Naive thymus-derived CD4-positive, alpha-beta T cell (primary cell): ENCODE measurements at regions of chr6 and their contacts with region 1.

Region 1: DNA sequence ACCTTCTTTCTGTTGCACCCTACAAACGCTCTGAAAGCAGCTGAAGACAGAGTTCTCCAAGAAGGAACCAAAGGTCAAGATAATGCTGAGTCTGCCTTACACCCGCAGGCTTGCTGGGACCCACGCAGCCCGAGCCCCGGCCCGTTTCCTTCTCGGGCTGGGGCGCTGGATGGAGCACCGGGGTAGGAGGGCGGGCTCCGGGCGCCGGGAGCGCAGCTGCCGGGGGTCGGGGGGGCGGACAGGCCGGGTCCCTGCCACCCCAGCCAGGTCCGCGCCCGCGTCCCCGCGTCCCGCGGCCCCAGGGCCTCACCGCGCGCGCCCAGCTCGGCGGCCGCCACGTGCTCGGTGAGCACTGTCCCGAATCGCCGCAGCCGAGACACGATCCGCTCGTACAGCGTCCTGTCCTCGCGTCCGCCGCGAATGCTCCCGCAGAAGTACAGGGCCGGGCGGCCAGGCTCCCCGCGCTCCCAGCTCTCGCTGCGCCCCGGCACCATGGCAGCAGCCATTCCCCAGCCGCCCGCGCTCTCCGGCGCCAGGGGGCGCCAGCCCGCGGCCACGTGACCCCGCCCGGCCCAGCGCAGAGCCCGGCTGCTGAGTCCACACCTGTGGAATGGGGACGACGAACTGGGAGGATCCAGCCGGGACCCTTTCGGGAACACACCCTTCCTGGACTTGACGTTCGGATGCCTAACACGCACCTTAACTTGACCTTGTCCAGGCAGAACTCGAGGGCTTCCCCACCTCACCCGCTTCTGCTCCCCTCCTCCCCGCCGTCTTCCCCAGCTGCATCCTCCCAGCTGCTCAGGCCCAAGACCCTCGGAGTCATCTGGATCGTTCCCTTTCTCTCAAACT is at the start of gene DNPH1:
- DNase-seq: peak; percentile 65 to 91 (median 81)
- ATAC-seq: peak; percentile 84
- H3K4me3 ChIP-seq: peak within 1 kb of the TSS; percentile 53
- H3K4me3 Mint-ChIP-seq: peak within 1 kb of the TSS; percentile 87 to 95 (median 91)
- H3K27ac ChIP-seq: peak within 1 kb of the TSS; percentile 88
- H3K27ac Mint-ChIP-seq: peak within 1 kb of the TSS; percentile 92 to 98 (median 95)
- H3K4me1 ChIP-seq: peaks cover 5 to 24% of the 10 kb centered on the region in 2 donors
- H3K4me1 Mint-ChIP-seq: peaks cover 28 to 48% (median 40%) of the 10 kb centered on the region in 7 donors
- H3K27me3 ChIP-seq: no peaks in the 10 kb centered on the region
- H3K27me3 Mint-ChIP-seq: peaks cover 0 to 16% (median 0%) of the 10 kb centered on the region in 5 donors
- total RNA-seq, gene DNPH1: 25.4 to 65.7 (median 33.9) TPM

Region 2: DNA sequence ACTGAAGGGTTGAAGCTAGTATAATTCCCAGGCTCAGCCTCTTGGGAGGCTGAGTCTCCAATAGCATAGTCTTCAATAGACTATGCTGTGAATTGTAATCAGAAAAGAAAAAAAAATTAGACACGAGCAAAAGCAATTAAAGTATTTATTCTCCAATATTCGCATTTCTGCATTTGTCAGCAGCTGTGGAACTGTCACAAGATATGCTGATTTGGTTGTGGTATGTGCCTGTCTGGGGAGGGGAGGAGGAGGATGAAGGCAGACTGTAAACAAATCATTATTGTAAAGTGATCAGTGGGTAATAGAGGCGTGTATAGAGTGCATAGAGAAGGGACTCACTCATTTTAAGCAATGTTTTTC is 457.5 kb before region 1 on chr6:
- CTCF ChIA-PET with region 1: no interaction called
- POLR2A ChIA-PET with region 1: interaction called, 3 read pairs
- intact Hi-C with region 1: loop called in 1 of 2 experiments (anchors 1 kb)
- DNase-seq: peak in 1 of 9 donors; percentile 63
- ATAC-seq: peak; percentile 35
- H3K4me3 ChIP-seq: peak overlapping the region; percentile 50
- H3K4me3 Mint-ChIP-seq: peak overlapping the region; percentile 67 to 91 (median 84)
- H3K27ac ChIP-seq: peak overlapping the region; percentile 91
- H3K27ac Mint-ChIP-seq: peak overlapping the region; percentile 99 to 100 (median 100)
- H3K4me1 ChIP-seq: peaks cover 67 to 72% of the 10 kb centered on the region in 2 donors
- H3K4me1 Mint-ChIP-seq: peaks cover 49 to 86% (median 75%) of the 10 kb centered on the region in 7 donors
- H3K27me3 ChIP-seq: no peaks in the 10 kb centered on the region
- H3K27me3 Mint-ChIP-seq: no peaks in the 10 kb centered on the region

Region 3: GRCh38 chr6:42938987-42939809 is 290.0 kb before region 1 on chr6:
- CTCF ChIA-PET with region 1: no interaction called
- POLR2A ChIA-PET with region 1: no interaction called
- intact Hi-C with region 1: no loop called
- DNase-seq: no peak
- ATAC-seq: no peak
- H3K4me3 ChIP-seq: no peak overlapping the region
- H3K4me3 Mint-ChIP-seq: peak overlapping the region in 2 of 10 donors; percentile 42 to 59
- H3K27ac ChIP-seq: no peak overlapping the region
- H3K27ac Mint-ChIP-seq: peak overlapping the region in 2 of 9 donors; percentile 45
- H3K4me1 ChIP-seq: no peaks in the 10 kb centered on the region
- H3K4me1 Mint-ChIP-seq: peaks cover 0 to 26% (median 20%) of the 10 kb centered on the region in 7 donors
- H3K27me3 ChIP-seq: no peaks in the 10 kb centered on the region
- H3K27me3 Mint-ChIP-seq: no peaks in the 10 kb centered on the region

Region 4: DNA sequence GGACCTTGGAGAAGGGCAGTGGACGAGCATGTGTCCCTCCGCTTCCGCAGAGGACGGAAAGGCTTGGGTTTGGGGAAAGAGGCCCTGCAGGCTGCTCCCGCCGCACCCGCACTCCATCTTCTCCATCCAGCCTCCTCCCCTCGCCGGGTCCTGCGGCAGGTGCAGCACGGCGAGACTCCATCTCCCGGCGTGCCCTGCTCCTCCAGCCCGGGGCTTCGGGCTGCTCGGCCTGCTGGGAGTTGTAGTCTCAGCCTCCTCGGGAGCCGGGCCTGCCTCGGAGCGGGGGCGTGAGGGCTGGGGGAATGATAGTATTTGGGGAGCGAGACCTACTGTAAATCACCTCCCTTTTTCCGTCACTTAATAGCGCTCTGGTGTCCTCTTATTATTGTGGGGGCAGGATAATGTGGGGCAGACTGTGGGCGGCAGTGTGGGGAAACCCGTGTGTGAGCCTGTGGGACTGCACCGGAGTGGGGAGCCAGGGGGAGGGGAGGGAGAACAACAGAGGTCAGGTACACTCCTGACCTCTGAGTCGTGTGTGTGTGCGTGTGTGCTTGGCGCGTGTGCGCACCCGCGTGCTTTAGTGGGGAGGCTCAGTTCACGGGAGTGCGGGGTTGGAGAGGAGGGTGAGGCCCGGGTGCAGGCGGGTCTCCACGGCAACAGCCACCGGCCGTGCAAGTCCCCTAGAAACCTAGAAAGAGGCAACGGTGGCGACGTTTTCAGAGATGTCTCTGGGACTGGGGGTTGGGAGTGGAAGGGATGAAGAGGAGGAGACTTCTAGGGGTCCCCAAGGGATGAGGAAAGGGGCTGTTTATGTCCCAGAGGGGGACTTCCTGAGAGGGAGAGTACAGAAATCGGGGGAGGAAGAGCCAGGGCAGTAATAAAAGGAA is 18.2 kb after region 1 on chr6:
- CTCF ChIA-PET with region 1: interaction called, 8 read pairs
- POLR2A ChIA-PET with region 1: interaction called, 6 read pairs
- intact Hi-C with region 1: loop called (anchors 1 kb)
- DNase-seq: peak; percentile 65 to 81 (median 78)
- ATAC-seq: peak; percentile 95
- H3K4me3 ChIP-seq: peak overlapping the region; percentile 84
- H3K4me3 Mint-ChIP-seq: peak overlapping the region in 9 of 10 donors; percentile 83 to 94 (median 88)
- H3K27ac ChIP-seq: peak overlapping the region; percentile 78
- H3K27ac Mint-ChIP-seq: peak overlapping the region; percentile 76 to 92 (median 89)
- H3K4me1 ChIP-seq: peaks cover 3 to 13% of the 10 kb centered on the region in 2 donors
- H3K4me1 Mint-ChIP-seq: peaks cover 11 to 26% (median 21%) of the 10 kb centered on the region in 7 donors
- H3K27me3 ChIP-seq: peaks cover 3 to 13% of the 10 kb centered on the region in 2 donors
- H3K27me3 Mint-ChIP-seq: peaks cover 7 to 33% (median 14%) of the 10 kb centered on the region in 5 donors

Region 5: GRCh38 chr6:43369174-43370022 is 140.2 kb after region 1 on chr6 and contains the start of gene ZNF318:
- CTCF ChIA-PET with region 1: no interaction called
- POLR2A ChIA-PET with region 1: interaction called, 8 read pairs
- intact Hi-C with region 1: loop called in 1 of 2 experiments (anchors 2 kb)
- DNase-seq: peak; percentile 85 to 95 (median 93)
- ATAC-seq: peak; percentile 97
- H3K4me3 ChIP-seq: peak within 1 kb of the TSS; percentile 90
- H3K4me3 Mint-ChIP-seq: peak within 1 kb of the TSS; percentile 75 to 97 (median 92)
- H3K27ac ChIP-seq: peak within 1 kb of the TSS; percentile 87
- H3K27ac Mint-ChIP-seq: peak within 1 kb of the TSS; percentile 91 to 98 (median 95)
- H3K4me1 ChIP-seq: peaks cover 20 to 23% of the 10 kb centered on the region in 2 donors
- H3K4me1 Mint-ChIP-seq: peaks cover 28 to 56% (median 50%) of the 10 kb centered on the region in 7 donors
- H3K27me3 ChIP-seq: no peaks in the 10 kb centered on the region
- H3K27me3 Mint-ChIP-seq: peaks cover 0 to 17% (median 0%) of the 10 kb centered on the region in 5 donors
- total RNA-seq, gene ZNF318: 15.8 to 40.2 (median 28.3) TPM

Region 6: GRCh38 chr6:43402820-43403219 is 173.6 kb after region 1 on chr6:
- CTCF ChIA-PET with region 1: interaction called, 8 read pairs
- POLR2A ChIA-PET with region 1: no interaction called
- intact Hi-C with region 1: loop called in 1 of 2 experiments (anchors 1 kb)
- DNase-seq: no peak
- ATAC-seq: no peak
- H3K4me3 ChIP-seq: no peak overlapping the region
- H3K4me3 Mint-ChIP-seq: no peak overlapping the region
- H3K27ac ChIP-seq: no peak overlapping the region
- H3K27ac Mint-ChIP-seq: no peak overlapping the region
- H3K4me1 ChIP-seq: no peaks in the 10 kb centered on the region
- H3K4me1 Mint-ChIP-seq: peaks cover 0 to 3% (median 0%) of the 10 kb centered on the region in 7 donors
- H3K27me3 ChIP-seq: no peaks in the 10 kb centered on the region
- H3K27me3 Mint-ChIP-seq: peaks cover 4 to 56% (median 23%) of the 10 kb centered on the region in 5 donors